ENCODE measurements at regions of chr1 and their contacts with region 1.

Region 1: GRCh38 chr1:170545476-170545875 is 13.5 kb downstream of the GORAB start:
- DNase-seq: no peak
- ATAC-seq: peak; percentile 54
- H3K4me3 ChIP-seq: no peak overlapping the region
- H3K27ac ChIP-seq: no peak overlapping the region
- H3K4me1 ChIP-seq: no peaks in the 10 kb centered on the region
- H3K27me3 ChIP-seq: no peaks in the 10 kb centered on the region
- CTCF ChIP-seq: no peak
- EP300 ChIP-seq: peak; percentile 11 to 91; a peak in 2 of 4 replicates
- POLR2A ChIP-seq: no peak
- RAD21 ChIP-seq: no peak

Region 2: DNA sequence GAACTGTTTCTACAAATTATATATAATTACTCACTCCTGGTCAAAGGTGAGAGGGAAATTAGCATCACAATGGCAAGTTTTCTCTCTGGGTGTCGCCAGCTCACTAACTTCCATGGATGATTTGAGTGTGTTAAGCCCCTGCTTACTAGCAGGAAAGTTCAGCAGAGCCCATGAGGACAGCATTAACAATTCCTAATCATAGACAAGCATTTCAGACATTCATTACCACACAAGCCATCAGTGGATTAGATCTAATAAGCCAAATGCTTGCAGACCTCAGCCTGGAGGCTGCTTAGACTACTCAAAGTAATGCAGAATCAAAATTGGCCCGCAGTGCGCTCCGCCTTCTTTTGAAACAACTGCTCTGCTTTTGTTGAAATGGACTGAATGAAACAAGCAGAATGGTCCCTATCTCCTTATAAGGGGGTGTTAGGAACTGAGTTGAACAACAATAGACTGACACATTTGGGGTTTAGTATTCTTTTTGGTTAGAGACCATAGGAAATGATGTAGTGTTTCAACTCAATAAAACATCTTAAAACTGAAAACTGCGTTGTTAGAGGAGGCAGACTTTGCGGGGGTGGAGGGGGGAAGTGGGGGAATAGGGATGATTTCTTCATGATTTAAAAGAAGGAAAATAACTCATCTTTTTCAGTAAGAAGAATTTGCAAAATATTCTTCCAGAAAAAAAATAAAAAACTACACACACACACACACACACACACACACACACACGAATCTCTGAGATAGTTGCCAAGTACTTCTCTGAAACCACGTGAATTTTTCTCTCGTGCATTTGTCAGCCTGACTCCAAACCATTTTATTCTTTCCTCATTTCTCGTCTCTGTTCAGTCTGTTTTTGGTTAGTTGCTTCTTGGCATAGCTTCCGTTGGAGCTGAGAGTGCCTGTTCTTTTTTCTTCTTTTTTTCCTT is 41.1 kb after region 1 on chr1:
- CTCF ChIA-PET with region 1: interaction called, 3 read pairs
- POLR2A ChIA-PET with region 1: interaction called, 6 read pairs
- RAD21 ChIA-PET with region 1: interaction called, 16 read pairs
- SMC1A ChIA-PET with region 1: interaction called, 6 read pairs
- in situ Hi-C with region 1: no loop called
- intact Hi-C with region 1: no loop called
- DNase-seq: no peak
- ATAC-seq: peak; percentile 74
- H3K4me3 ChIP-seq: no peak overlapping the region
- H3K27ac ChIP-seq: no peak overlapping the region
- H3K4me1 ChIP-seq: no peaks in the 10 kb centered on the region
- H3K27me3 ChIP-seq: no peaks in the 10 kb centered on the region
- CTCF ChIP-seq: no peak
- EP300 ChIP-seq: no peak
- POLR2A ChIP-seq: no peak
- RAD21 ChIP-seq: no peak

Measured in GM12878 (cell line).